Sigmoid colon (tissue), 7 donors: ENCODE measurements at regions of chr5 and their contacts with region 1.

Region 1: DNA sequence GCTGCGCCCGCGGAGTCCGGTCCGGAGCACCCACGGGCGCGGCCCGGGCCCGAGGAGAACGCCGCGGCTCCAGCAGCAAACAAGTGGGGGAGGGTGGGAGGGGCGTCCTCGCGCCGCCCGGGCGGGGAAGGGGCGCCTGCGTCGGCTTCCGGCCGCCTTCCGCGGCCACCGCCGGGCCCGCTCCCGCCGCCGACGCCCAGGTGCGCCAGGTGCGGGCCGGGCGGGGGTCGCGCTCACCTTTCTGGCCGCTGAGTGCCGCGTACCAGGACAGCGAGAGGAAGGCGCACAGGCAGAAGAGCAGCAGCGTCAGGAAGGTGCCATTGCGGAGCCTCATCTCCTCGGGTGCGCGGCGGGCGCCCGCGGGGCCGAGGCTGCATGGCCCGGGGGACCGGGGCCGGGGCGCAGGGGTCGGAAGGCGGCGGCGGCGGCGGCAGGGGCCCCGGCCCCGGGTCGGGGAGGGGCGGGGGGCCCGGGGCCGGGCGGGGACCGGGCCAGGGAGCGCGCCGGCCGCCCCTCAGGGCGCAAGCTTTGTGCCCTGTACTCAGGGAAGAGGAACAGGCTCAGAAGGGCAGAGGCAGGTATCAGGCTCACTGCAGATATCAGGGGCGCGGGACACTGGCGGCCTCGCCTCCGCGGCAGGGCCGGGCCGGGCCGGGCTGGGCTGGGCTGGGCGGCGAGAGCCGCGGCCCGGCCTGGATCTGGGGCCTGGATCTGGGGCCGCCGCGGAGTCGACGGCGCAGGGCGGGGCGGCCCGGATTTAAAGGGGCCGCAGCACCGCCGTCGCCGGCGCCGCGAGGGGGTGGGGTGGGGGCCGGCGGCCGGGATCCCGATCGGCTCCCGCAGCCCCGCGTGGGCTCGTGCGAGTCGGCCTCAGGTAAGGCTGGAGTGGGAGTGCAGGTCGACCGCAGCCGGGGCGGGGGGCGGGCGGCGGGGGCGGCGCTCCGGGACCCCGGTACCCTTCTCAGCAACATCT is at the start of gene MGAT4B:
- DNase-seq: peak; percentile 86
- H3K4me3 ChIP-seq: peak within 1 kb of the TSS; percentile 84 to 98 (median 90)
- H3K27ac ChIP-seq: peak within 1 kb of the TSS; percentile 95 to 99 (median 98)
- H3K4me1 ChIP-seq: peaks cover 0 to 52% (median 48%) of the 10 kb centered on the region in 4 donors
- H3K27me3 ChIP-seq: no peaks in the 10 kb centered on the region
- CTCF ChIP-seq: no peak
- EP300 ChIP-seq: no peak
- POLR2A ChIP-seq: no peak
- total RNA-seq, gene MGAT4B: 27.8 to 56.8 (median 31.5) TPM

Region 2: DNA sequence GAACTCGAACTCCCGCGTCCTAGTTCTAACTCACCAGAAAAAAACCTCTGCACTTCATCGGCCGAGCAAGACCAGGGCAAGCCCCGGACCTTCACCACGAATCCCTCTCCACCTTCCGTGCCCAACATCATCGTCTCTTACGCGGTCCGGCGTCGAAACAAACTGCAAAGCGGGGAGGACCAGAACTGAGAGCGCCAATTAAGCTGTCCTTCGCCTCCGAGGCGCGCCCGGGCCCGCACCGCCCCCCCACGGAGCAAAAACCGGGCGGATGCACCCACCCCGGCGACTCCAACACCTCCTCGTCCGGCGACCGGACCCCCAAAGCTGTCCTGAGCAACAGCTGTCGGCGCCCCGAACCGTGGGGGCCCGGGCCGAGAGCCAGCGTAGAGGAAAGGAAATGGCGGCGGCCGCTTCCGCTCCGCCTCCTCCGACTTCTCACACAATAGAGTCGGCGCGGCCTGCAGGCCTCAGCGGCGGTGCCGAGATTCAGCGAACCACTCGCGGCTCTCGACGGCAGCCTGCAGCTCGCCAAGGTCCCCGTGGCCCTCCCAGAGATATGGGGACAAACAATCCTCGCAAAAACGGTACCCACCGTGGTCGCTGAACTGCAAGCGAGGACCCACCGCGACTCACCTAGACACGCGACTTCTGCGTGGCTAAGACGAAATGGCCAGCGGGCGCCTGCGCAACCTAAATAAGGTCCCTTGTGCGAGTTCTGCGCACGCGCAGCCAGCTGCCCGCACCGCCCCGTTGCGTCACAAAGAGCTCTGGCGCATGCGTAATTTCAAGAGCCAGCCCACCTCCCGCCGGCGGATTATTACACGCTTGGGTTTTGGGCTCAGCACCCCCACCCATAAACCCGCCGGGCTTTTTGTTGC is 183.3 kb before region 1 on chr5 and contains the start of gene HNRNPH1:
- intact Hi-C with region 1: loop called (anchors 5 kb)
- DNase-seq: peak; percentile 100
- H3K4me3 ChIP-seq: peak within 1 kb of the TSS; percentile 98 to 100 (median 100)
- H3K27ac ChIP-seq: peak within 1 kb of the TSS; percentile 100
- H3K4me1 ChIP-seq: peaks cover 0 to 50% (median 48%) of the 10 kb centered on the region in 4 donors
- H3K27me3 ChIP-seq: no peaks in the 10 kb centered on the region
- CTCF ChIP-seq: peak in 1 of 4 experiments; percentile 9
- EP300 ChIP-seq: peak in 2 of 4 donors; percentile 24 to 40
- POLR2A ChIP-seq: peak; percentile 100
- total RNA-seq, gene HNRNPH1: 264 to 495 (median 312) TPM

Region 3: DNA sequence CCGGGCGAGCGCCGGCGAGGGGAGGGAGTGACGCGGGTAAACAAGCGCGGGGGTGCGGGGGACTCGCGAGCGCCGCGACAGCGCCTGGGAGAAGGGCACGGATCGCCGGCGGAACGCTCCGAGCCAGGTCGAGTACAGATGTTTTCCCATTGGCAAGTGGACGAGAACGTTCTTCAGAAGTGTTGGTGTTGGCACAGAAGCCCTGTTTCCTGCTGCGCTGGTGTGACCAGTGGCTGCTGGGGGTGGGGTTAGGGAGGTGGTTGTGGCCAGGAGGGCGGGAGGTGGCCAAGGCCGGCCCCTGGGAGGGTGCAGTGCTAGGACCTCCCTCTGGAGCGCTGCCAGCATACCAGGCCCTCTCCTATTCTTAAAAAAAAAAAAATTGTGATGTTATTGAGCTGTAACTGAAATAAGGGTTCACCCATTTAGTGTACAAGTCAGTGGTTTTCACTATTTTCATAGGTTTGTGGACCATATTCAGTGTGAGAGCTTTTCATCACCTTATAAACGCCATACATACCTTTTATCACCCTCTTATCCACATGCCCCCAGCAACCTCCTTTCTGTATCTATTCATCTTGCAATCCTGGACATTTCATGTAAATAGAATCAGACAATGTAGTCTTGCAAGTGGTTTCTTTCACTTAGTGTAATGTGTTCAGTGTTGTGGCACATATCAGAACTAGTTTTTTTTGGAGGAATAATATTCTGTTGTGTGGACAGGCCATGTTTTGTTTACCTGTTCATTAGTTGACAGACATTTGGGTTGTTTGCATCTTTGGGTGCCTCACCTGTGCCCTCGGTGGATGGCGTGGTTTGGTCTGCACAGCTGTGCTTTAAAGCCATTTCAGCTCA is 15.3 kb after region 1 on chr5:
- intact Hi-C with region 1: loop called (anchors 2 kb)
- DNase-seq: peak; percentile 99
- H3K4me3 ChIP-seq: peak overlapping the region; percentile 68 to 99 (median 97)
- H3K27ac ChIP-seq: peak overlapping the region; percentile 97 to 100 (median 99)
- H3K4me1 ChIP-seq: peaks cover 0 to 86% (median 79%) of the 10 kb centered on the region in 4 donors
- H3K27me3 ChIP-seq: no peaks in the 10 kb centered on the region
- CTCF ChIP-seq: no peak
- EP300 ChIP-seq: no peak
- POLR2A ChIP-seq: peak; percentile 79 to 82

Region 4: GRCh38 chr5:180034564-180034963 is 228.0 kb after region 1 on chr5:
- intact Hi-C with region 1: no loop called
- DNase-seq: no peak
- H3K4me3 ChIP-seq: no peak overlapping the region
- H3K27ac ChIP-seq: no peak overlapping the region
- H3K4me1 ChIP-seq: no peaks in the 10 kb centered on the region
- H3K27me3 ChIP-seq: no peaks in the 10 kb centered on the region
- CTCF ChIP-seq: no peak
- EP300 ChIP-seq: no peak
- POLR2A ChIP-seq: no peak